ENCODE measurements at regions of chr22 and their contacts with region 1.

Region 1: DNA sequence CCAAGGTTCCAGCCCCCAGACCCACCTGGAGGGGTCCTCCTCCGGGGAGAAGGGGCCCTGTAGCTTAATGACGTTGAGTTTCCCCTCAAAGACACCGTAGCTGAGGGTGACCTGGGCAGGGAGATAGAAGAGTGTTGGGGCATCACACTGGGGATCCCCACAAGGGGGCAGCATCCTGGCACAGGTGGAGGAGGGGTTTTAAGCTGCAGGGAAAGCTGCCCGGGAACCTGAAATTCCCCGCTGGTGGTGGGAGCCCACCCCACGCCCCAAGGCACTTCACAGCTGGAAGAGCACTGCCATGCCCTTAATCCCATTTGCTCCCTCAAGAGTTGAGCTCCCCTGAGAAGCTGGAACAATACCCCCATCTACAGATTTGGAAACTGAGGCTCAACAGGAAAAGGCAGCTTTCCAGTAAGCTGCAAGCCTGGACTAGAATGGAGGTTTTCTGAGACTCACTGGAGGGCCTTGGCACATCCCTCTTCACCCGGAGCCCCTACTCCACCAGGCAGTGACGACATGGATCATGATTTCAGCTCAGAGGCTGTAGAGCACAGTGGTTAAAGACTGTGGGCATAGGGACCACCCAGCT is 13.7 kb downstream of the MFNG start:
- DNase-seq: peak; percentile 57
- ATAC-seq: peak; percentile 52
- H3K4me3 Mint-ChIP-seq: no peak overlapping the region
- H3K27ac Mint-ChIP-seq: peak overlapping the region; percentile 52
- H3K4me1 Mint-ChIP-seq: no peaks in the 10 kb centered on the region
- H3K27me3 Mint-ChIP-seq: no peaks in the 10 kb centered on the region

Region 2: DNA sequence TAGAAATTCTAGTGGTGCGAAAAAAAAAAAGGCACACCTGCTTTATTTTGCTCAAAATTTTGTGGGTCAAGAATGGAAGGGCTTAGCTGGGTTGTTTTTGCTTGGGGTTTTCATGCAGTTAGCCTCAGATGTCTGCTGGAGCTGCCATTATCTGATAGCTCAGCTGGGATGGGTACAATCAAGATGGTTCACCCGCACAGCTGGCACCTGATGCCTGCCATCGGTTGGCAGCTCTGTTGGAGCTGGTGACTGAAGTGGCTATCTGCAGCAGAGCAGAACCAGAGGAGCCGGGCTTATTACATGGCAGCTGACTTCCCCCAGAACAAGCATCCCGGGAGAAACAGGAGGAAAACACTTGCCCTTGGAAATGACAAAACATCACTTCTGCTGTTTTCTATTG is 33.2 kb before region 1 on chr22:
- CTCF ChIA-PET with region 1: no interaction called
- DNase-seq: no peak
- ATAC-seq: no peak
- H3K4me3 Mint-ChIP-seq: no peak overlapping the region
- H3K27ac Mint-ChIP-seq: no peak overlapping the region
- H3K4me1 Mint-ChIP-seq: peaks cover 6% of the 10 kb centered on the region
- H3K27me3 Mint-ChIP-seq: peaks cover 12% of the 10 kb centered on the region

Region 3: GRCh38 chr22:37486224-37486845 is 13.8 kb after region 1 on chr22 and contains the start of gene MFNG:
- CTCF ChIA-PET with region 1: interaction called, 34 read pairs
- DNase-seq: peak; percentile 83
- ATAC-seq: peak; percentile 66
- H3K4me3 Mint-ChIP-seq: peak within 1 kb of the TSS; percentile 94
- H3K27ac Mint-ChIP-seq: peak within 1 kb of the TSS; percentile 88
- H3K4me1 Mint-ChIP-seq: peaks cover 47% of the 10 kb centered on the region
- H3K27me3 Mint-ChIP-seq: no peaks in the 10 kb centered on the region
- total RNA-seq, gene MFNG: 196 to 220 TPM

Region 4: GRCh38 chr22:37492428-37493344 is 20.2 kb after region 1 on chr22:
- CTCF ChIA-PET with region 1: interaction called, 41 read pairs
- DNase-seq: peak; percentile 79
- ATAC-seq: peak; percentile 86
- H3K4me3 Mint-ChIP-seq: no peak overlapping the region
- H3K27ac Mint-ChIP-seq: no peak overlapping the region
- H3K4me1 Mint-ChIP-seq: peaks cover 18% of the 10 kb centered on the region
- H3K27me3 Mint-ChIP-seq: peaks cover 3% of the 10 kb centered on the region

Region 5: GRCh38 chr22:37498289-37498909 is 25.9 kb after region 1 on chr22:
- CTCF ChIA-PET with region 1: interaction called, 41 read pairs
- DNase-seq: peak; percentile 78
- ATAC-seq: peak; percentile 96
- H3K4me3 Mint-ChIP-seq: no peak overlapping the region
- H3K27ac Mint-ChIP-seq: no peak overlapping the region
- H3K4me1 Mint-ChIP-seq: peaks cover 14% of the 10 kb centered on the region
- H3K27me3 Mint-ChIP-seq: peaks cover 5% of the 10 kb centered on the region

Region 6: DNA sequence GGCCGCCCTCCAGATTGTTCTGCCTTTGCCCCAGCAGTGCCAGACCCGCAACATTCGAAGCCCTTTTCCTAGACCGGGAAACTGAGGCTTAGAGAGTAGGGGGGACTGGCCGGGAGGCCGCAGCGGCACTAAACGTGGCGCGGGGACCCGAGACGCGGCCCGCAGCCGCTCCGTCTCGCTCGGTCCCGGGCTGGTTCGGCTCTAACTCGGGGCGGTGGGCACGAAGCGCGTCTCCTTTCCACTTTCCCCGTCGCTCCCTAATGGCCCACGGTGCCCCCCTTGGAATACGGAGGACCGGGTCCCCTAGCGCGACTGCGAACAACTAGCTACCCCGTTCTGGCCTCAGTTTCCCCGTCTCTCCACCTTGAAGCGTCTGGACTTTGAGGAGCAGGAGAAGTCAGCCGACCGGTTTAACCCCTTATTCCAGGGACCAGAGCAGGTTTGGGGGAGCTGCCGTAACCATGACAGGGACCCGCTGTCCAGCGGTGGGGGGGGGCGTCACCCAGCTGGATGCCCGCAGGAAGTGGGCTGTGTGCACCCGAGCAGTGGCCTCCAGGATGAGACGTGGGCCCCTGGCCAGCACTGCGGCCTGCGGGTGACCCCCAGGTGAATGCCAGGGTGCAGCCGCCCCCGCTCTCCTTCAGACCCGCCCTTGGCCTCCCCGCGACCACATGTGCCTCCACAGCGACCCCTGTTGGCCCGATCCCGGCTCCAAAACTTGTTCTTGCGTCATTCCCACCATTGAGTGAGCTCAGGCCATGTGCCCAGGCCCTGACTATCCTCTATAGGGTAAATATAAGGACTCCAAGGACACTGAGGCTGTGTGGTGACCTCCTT is 88.9 kb after region 1 on chr22:
- CTCF ChIA-PET with region 1: interaction called, 39 read pairs
- DNase-seq: peak; percentile 87
- ATAC-seq: peak; percentile 52
- H3K4me3 Mint-ChIP-seq: peak overlapping the region; percentile 13
- H3K27ac Mint-ChIP-seq: no peak overlapping the region
- H3K4me1 Mint-ChIP-seq: peaks cover 23% of the 10 kb centered on the region
- H3K27me3 Mint-ChIP-seq: peaks cover 74% of the 10 kb centered on the region

Measured in activated CD8-positive, alpha-beta memory T cell treated with anti-CD3 and anti-CD28 coated beads, Interleukin-2, amount 10 ng/mL, durations not matched to agents 7 days and 5 days (primary cell).